HepG2 (cell line): ENCODE measurements at regions of chr17 and their contacts with region 1.

Region 1: GRCh38 chr17:39699818-39700147 is at the start of gene ERBB2:
- DNase-seq: peak; percentile 64
- ATAC-seq: peak; percentile 20
- H3K4me3 ChIP-seq: peak within 1 kb of the TSS; percentile 90 to 94 (median 90)
- H3K27ac ChIP-seq: peak within 1 kb of the TSS; percentile 78
- H3K4me1 ChIP-seq: peaks cover 78% of the 10 kb centered on the region
- H3K27me3 ChIP-seq: no peaks in the 10 kb centered on the region
- CTCF ChIP-seq: 0 out of 2 replicates have a peak, but pooled peaks have one; percentile 14
- EP300 ChIP-seq: no peak
- POLR2A ChIP-seq: peak; percentile 53 to 73
- RAD21 ChIP-seq: no peak
- total RNA-seq, gene ERBB2: 30.2 and 64.1 TPM in 2 replicates

Region 2: DNA sequence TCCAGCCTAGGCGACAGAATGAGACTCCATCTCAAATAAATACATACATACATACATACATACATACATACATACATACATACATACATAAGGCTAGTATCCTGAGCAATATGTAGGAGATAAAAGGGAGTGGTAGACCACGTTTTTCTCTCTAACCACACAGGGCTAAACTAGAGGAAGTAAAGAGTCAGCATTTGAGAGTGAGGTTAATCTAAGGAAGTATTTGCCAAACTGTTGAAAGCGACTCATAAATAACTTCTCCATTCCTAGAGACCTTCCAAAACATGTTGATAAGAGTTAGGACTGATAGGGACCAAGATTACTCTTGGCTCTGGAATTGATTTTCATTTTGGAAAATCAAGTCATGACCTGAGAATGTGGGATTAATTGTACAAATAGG is 160.9 kb before region 1 on chr17:
- CTCF ChIA-PET with region 1: no interaction called
- POLR2A ChIA-PET with region 1: no interaction called
- in situ Hi-C with region 1: no loop called
- intact Hi-C with region 1: no loop called
- DNase-seq: no peak
- ATAC-seq: no peak
- H3K4me3 ChIP-seq: no peak overlapping the region
- H3K27ac ChIP-seq: no peak overlapping the region
- H3K4me1 ChIP-seq: peaks cover 7% of the 10 kb centered on the region; the same call in 1 of the 2 replicates
- H3K27me3 ChIP-seq: no peaks in the 10 kb centered on the region
- CTCF ChIP-seq: no peak
- EP300 ChIP-seq: no peak
- POLR2A ChIP-seq: no peak
- RAD21 ChIP-seq: no peak

Region 3: DNA sequence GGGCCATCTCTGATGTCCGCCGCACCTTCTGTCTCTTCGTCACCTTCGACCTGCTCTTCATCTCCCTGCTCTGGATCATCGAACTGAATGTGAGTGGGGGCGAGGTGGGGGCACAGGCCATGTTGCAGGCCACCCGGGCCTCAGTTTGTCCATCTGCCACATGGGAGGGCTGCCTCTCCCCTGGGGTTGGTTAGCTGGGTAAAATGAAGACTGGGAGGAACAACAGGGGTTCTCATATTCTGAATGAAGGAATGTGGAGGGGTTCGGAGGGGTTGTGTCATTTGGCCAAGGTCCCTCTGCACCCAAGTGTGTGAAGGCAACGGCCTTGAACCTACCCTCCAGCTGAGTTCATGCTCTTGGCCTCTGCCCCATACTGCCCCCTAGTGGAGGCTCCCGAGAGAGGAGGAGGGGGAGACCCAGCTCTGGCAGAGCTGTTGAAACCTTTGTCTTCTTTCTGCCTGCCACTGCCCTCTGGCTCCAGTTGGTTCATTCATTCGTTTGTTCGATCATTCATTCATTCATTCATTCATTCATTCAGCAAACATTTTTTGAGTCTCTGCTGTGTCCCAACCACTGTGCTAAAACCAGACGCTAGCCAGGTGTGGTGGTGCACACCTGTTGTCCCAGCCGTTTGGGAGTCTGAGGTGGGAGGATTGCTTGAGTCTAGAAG is 46.0 kb before region 1 on chr17:
- CTCF ChIA-PET with region 1: no interaction called
- POLR2A ChIA-PET with region 1: interaction called, 21 read pairs
- in situ Hi-C with region 1: no loop called
- intact Hi-C with region 1: no loop called
- DNase-seq: peak; percentile 79
- ATAC-seq: peak; percentile 65
- H3K4me3 ChIP-seq: peak overlapping the region in 1 of 3 experiments; percentile 54; a peak in 1 of 6 replicates
- H3K27ac ChIP-seq: peak overlapping the region; percentile 48
- H3K4me1 ChIP-seq: peaks cover 31% of the 10 kb centered on the region
- H3K27me3 ChIP-seq: no peaks in the 10 kb centered on the region
- CTCF ChIP-seq: peak; percentile 93
- EP300 ChIP-seq: peak in 1 of 2 experiments; percentile 53; a peak in 1 of 4 replicates
- POLR2A ChIP-seq: no peak
- RAD21 ChIP-seq: peak; percentile 76

Region 4: DNA sequence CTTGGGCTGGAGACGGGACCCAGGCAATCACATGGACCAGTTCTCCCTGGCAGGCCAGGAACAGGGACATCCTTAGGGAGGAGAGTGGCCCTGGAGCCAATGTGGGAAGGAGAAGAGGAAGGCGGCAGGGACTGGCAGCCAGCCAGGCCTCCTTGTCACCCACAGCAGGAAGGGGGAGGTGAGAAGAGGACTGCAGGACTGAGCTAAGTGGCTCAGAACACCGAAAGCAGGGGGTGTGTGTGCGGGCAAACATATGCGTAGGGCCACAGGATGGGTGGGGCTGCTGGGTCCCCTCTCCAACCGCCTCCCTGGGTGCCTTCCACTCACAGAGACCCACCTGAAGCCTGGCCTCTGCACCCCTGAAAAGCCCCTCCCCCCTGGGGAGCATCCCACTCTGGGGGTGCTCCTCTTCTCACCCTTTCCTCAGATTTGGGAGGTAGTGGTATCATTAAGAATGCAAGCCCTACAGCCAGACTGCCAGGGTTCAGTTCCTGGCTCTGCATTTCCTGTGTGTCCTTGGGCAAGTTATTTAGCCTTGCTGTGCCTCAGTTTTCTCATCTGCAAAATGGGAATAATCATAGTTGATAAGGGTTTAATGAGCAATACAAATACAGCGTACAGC is 23.5 kb before region 1 on chr17:
- CTCF ChIA-PET with region 1: no interaction called
- POLR2A ChIA-PET with region 1: interaction called, 96 read pairs
- in situ Hi-C with region 1: no loop called
- intact Hi-C with region 1: no loop called
- DNase-seq: no peak
- ATAC-seq: no peak
- H3K4me3 ChIP-seq: no peak overlapping the region
- H3K27ac ChIP-seq: peak overlapping the region; percentile 41
- H3K4me1 ChIP-seq: peaks cover 81% of the 10 kb centered on the region
- H3K27me3 ChIP-seq: peaks cover 0 to 3% of the 10 kb centered on the region in 2 experiments; a peak in 2 of 5 replicates
- CTCF ChIP-seq: no peak
- EP300 ChIP-seq: no peak
- POLR2A ChIP-seq: no peak
- RAD21 ChIP-seq: no peak

Region 5: DNA sequence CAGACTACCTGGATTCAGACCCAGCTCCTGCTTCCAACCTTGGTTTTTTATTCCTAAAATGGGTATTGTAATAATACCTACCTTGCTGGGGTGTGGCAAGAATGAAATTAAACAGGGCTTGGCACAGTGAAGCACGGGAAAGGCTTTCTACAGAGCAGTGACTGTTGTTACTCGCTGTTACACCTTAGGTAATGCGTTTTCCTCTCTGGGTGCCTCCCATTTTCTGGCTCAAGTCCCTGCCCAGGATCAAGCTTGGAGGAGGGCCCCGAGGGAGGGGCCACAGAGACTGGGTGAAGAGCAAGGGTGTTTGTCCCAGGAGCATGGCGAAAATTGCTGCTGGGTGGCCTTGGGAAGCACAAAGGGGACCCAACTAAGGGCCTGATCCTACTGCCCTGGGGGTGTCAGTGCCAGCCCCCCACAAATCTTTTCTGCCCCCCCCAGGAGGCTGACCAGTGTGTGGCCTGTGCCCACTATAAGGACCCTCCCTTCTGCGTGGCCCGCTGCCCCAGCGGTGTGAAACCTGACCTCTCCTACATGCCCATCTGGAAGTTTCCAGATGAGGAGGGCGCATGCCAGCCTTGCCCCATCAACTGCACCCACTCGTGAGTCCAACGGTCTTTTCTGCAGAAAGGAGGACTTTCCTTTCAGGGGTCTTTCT is 17.2 kb after region 1 on chr17:
- CTCF ChIA-PET with region 1: no interaction called
- POLR2A ChIA-PET with region 1: interaction called, 13 read pairs
- in situ Hi-C with region 1: no loop called
- intact Hi-C with region 1: loop called (anchors 2 kb)
- DNase-seq: no peak
- ATAC-seq: no peak
- H3K4me3 ChIP-seq: no peak overlapping the region
- H3K27ac ChIP-seq: no peak overlapping the region
- H3K4me1 ChIP-seq: no peaks in the 10 kb centered on the region
- H3K27me3 ChIP-seq: no peaks in the 10 kb centered on the region
- CTCF ChIP-seq: no peak
- EP300 ChIP-seq: no peak
- POLR2A ChIP-seq: no peak
- RAD21 ChIP-seq: no peak

Region 6: GRCh38 chr17:39738931-39739884 is 39.4 kb after region 1 on chr17:
- CTCF ChIA-PET with region 1: no interaction called
- POLR2A ChIA-PET with region 1: interaction called, 58 read pairs
- in situ Hi-C with region 1: no loop called
- intact Hi-C with region 1: no loop called
- DNase-seq: peak; percentile 100
- ATAC-seq: peak; percentile 69
- H3K4me3 ChIP-seq: peak overlapping the region; percentile 89 to 96 (median 95)
- H3K27ac ChIP-seq: peak overlapping the region; percentile 97
- H3K4me1 ChIP-seq: peaks cover 44% of the 10 kb centered on the region
- H3K27me3 ChIP-seq: no peaks in the 10 kb centered on the region; a peak in 1 of 5 replicates
- CTCF ChIP-seq: peak; percentile 40
- EP300 ChIP-seq: peak in 1 of 2 experiments; percentile 76; a peak in 2 of 4 replicates
- POLR2A ChIP-seq: peak; percentile 72 to 79
- RAD21 ChIP-seq: peak; percentile 44